T-cell (primary cell): ENCODE measurements at regions of chr9 and their contacts with region 1.

Region 1: GRCh38 chr9:36407122-36407723 is 7.2 kb upstream of the RNF38 start:
- DNase-seq: peak; percentile 27 to 89 (median 54)
- ATAC-seq: peak; percentile 90 to 92 (median 91)
- H3K4me3 ChIP-seq: no peak overlapping the region
- H3K4me3 Mint-ChIP-seq: no peak overlapping the region
- H3K27ac ChIP-seq: peak overlapping the region; percentile 32
- H3K27ac Mint-ChIP-seq: peak overlapping the region; percentile 70 to 73
- H3K4me1 ChIP-seq: peaks cover 5 to 10% of the 10 kb centered on the region in 2 experiments
- H3K4me1 Mint-ChIP-seq: peaks cover 21 to 32% (median 28%) of the 10 kb centered on the region in 3 donors
- H3K27me3 ChIP-seq: no peaks in the 10 kb centered on the region
- H3K27me3 Mint-ChIP-seq: no peaks in the 10 kb centered on the region

Region 2: DNA sequence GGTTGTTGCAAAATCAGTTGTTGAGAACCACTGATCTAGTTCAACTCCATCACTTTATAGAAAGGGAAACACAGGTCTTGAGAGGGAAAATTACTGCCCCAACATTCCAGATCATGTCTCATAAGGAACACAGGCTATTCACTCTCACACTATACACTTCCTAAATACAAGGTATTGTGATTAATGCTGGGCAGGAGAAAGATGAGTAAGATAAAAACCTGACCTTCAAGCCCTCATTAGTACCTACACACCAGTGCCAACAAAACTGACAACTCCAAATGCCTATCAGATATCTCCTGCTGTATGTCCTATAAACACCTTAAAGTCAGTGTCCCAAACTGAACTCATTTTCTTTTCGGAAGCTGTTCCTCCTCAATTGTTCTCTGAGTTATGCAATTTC is 157.1 kb before region 1 on chr9:
- CTCF ChIA-PET with region 1: no interaction called
- POLR2A ChIA-PET with region 1: no interaction called
- DNase-seq: no peak
- ATAC-seq: no peak
- H3K4me3 ChIP-seq: no peak overlapping the region
- H3K4me3 Mint-ChIP-seq: no peak overlapping the region
- H3K27ac ChIP-seq: no peak overlapping the region
- H3K27ac Mint-ChIP-seq: no peak overlapping the region
- H3K4me1 ChIP-seq: no peaks in the 10 kb centered on the region
- H3K4me1 Mint-ChIP-seq: peaks cover 11 to 19% (median 18%) of the 10 kb centered on the region in 3 donors
- H3K27me3 ChIP-seq: no peaks in the 10 kb centered on the region
- H3K27me3 Mint-ChIP-seq: no peaks in the 10 kb centered on the region

Region 3: GRCh38 chr9:36436909-36437308 is 29.7 kb after region 1 on chr9:
- CTCF ChIA-PET with region 1: interaction called, 8 to 13 read pairs
- POLR2A ChIA-PET with region 1: interaction called in 1 of 2 experiments, 11 read pairs
- DNase-seq: no peak
- ATAC-seq: no peak
- H3K4me3 ChIP-seq: no peak overlapping the region
- H3K4me3 Mint-ChIP-seq: no peak overlapping the region
- H3K27ac ChIP-seq: no peak overlapping the region
- H3K27ac Mint-ChIP-seq: no peak overlapping the region
- H3K4me1 ChIP-seq: peaks cover 5 to 6% of the 10 kb centered on the region in 2 experiments
- H3K4me1 Mint-ChIP-seq: peaks cover 48 to 49% (median 49%) of the 10 kb centered on the region in 3 donors
- H3K27me3 ChIP-seq: no peaks in the 10 kb centered on the region
- H3K27me3 Mint-ChIP-seq: no peaks in the 10 kb centered on the region

Region 4: GRCh38 chr9:36450110-36450732 is 43.0 kb after region 1 on chr9:
- CTCF ChIA-PET with region 1: interaction called, 9 to 29 read pairs
- POLR2A ChIA-PET with region 1: no interaction called
- DNase-seq: peak in 9 of 35 experiments; percentile 6 to 64 (median 24)
- ATAC-seq: no peak
- H3K4me3 ChIP-seq: no peak overlapping the region
- H3K4me3 Mint-ChIP-seq: no peak overlapping the region
- H3K27ac ChIP-seq: no peak overlapping the region
- H3K27ac Mint-ChIP-seq: no peak overlapping the region
- H3K4me1 ChIP-seq: peaks cover 0 to 15% of the 10 kb centered on the region in 2 experiments
- H3K4me1 Mint-ChIP-seq: peaks cover 26 to 39% (median 27%) of the 10 kb centered on the region in 3 donors
- H3K27me3 ChIP-seq: no peaks in the 10 kb centered on the region
- H3K27me3 Mint-ChIP-seq: no peaks in the 10 kb centered on the region

Region 5: DNA sequence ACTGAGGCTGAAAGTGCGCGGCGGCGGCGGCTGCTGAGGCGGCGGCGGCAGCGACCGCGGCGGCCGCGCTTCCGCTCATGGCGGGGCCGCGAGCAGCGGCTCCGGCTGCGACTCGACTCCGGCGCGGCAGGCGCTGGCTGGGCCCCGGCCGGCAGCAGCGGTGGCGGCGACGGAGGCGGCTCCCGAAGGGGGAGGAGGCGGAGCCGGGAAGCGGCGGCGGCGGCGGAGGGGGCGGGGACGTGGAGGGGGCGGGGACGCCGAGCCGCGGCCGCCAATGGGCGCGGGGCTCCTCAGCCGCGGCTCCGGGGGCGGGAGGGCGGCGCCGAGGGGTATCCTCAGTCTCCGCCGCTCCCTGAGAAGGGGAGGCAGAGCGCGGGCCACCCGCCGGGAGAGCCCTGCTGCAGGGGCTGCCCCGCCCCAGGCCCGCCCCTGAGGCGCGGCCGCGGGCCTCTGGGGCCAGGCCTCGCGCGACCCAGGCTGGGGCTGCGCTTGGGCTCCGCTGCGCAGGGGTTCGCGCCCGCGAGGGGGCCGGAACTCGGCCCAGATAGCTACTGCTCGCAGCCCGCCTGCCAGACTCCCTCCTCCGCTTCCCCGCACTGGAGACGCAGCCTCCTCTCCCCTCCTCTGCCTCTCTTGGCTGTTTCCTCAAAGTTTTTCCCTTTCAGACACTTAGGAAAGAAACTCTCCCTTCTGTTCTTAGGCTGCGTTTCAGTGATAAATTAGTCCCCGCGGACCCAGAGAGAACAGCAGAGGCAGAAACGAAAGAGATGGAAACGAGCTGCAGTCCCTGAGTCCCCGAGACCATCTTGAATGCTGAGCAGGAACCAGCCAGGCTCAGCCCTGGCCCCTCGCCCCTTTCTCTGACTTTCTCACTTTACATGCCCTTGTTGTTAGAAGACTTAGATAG is 80.5 kb after region 1 on chr9:
- CTCF ChIA-PET with region 1: interaction called in 1 of 2 experiments, 10 read pairs
- POLR2A ChIA-PET with region 1: no interaction called
- DNase-seq: peak; percentile 78 to 95 (median 88)
- ATAC-seq: peak; percentile 88 to 91 (median 89)
- H3K4me3 ChIP-seq: peak overlapping the region; percentile 54 to 70
- H3K4me3 Mint-ChIP-seq: peak overlapping the region; percentile 93 to 97 (median 95)
- H3K27ac ChIP-seq: peak overlapping the region; percentile 96
- H3K27ac Mint-ChIP-seq: peak overlapping the region; percentile 100
- H3K4me1 ChIP-seq: peaks cover 24 to 42% of the 10 kb centered on the region in 2 experiments
- H3K4me1 Mint-ChIP-seq: peaks cover 67 to 71% (median 69%) of the 10 kb centered on the region in 3 donors
- H3K27me3 ChIP-seq: no peaks in the 10 kb centered on the region
- H3K27me3 Mint-ChIP-seq: no peaks in the 10 kb centered on the region

Region 6: GRCh38 chr9:36560857-36561221 is 153.6 kb after region 1 on chr9:
- CTCF ChIA-PET with region 1: interaction called, 49 to 82 read pairs
- POLR2A ChIA-PET with region 1: no interaction called
- DNase-seq: no peak
- ATAC-seq: no peak
- H3K4me3 ChIP-seq: no peak overlapping the region
- H3K4me3 Mint-ChIP-seq: no peak overlapping the region
- H3K27ac ChIP-seq: no peak overlapping the region
- H3K27ac Mint-ChIP-seq: no peak overlapping the region
- H3K4me1 ChIP-seq: no peaks in the 10 kb centered on the region
- H3K4me1 Mint-ChIP-seq: peaks cover 0 to under 1% (median 0%) of the 10 kb centered on the region in 3 donors
- H3K27me3 ChIP-seq: peaks cover 0 to 4% of the 10 kb centered on the region in 2 experiments
- H3K27me3 Mint-ChIP-seq: no peaks in the 10 kb centered on the region

Region 7: GRCh38 chr9:36609306-36609705 is 202.1 kb after region 1 on chr9:
- CTCF ChIA-PET with region 1: no interaction called
- POLR2A ChIA-PET with region 1: no interaction called
- DNase-seq: no peak
- ATAC-seq: no peak
- H3K4me3 ChIP-seq: no peak overlapping the region
- H3K4me3 Mint-ChIP-seq: no peak overlapping the region
- H3K27ac ChIP-seq: no peak overlapping the region
- H3K27ac Mint-ChIP-seq: no peak overlapping the region
- H3K4me1 ChIP-seq: no peaks in the 10 kb centered on the region
- H3K4me1 Mint-ChIP-seq: no peaks in the 10 kb centered on the region
- H3K27me3 ChIP-seq: no peaks in the 10 kb centered on the region
- H3K27me3 Mint-ChIP-seq: no peaks in the 10 kb centered on the region

Region 8: GRCh38 chr9:36665921-36666431 is 258.8 kb after region 1 on chr9:
- CTCF ChIA-PET with region 1: no interaction called
- POLR2A ChIA-PET with region 1: no interaction called
- DNase-seq: no peak
- ATAC-seq: no peak
- H3K4me3 ChIP-seq: no peak overlapping the region
- H3K4me3 Mint-ChIP-seq: no peak overlapping the region
- H3K27ac ChIP-seq: no peak overlapping the region
- H3K27ac Mint-ChIP-seq: no peak overlapping the region
- H3K4me1 ChIP-seq: peaks cover 0 to 3% of the 10 kb centered on the region in 2 experiments
- H3K4me1 Mint-ChIP-seq: peaks cover 5 to 12% (median 10%) of the 10 kb centered on the region in 3 donors
- H3K27me3 ChIP-seq: no peaks in the 10 kb centered on the region
- H3K27me3 Mint-ChIP-seq: no peaks in the 10 kb centered on the region